GM10248 (cell line): ENCODE measurements at regions of chr19 and their contacts with region 1.

Region 1: DNA sequence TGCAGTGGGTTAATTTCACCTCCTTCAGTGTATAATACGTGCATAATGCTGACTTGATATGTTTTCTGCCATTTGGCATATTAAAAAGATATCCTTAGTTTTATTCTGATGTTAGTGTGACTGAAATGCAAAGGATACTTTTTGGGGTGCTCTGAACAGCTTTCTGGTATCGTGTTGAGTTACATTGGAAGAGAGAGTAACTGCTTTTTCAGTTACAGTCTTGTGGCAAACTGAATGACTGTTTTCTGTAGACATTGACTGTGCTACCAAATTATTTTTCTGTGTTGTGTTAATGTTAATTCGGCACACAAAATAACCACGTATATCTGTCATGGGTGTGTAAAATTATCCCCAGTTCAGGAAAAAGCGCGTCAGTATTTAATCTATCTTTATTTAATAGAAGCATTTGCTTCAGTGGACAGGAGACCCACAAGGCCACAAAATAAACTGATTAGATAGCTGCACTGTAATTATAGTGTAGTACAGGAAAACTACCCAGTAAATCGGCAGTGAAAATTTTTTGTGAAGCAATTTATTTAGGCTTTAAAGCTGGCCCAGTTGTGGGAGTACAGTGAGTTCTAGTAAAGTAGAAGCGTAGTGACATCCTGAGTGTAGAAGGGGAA is 2.5 kb downstream of the URI1 start:
- DNase-seq: no peak
- CTCF ChIP-seq: no peak

Region 2: GRCh38 chr19:29966588-29967249 is 22.2 kb after region 1 on chr19:
- CTCF ChIA-PET with region 1: interaction called, 14 read pairs
- POLR2A ChIA-PET with region 1: no interaction called
- DNase-seq: no peak
- CTCF ChIP-seq: no peak